Heart left ventricle (tissue), 16 donors: ENCODE measurements at regions of chr12 and their contacts with region 1.

Region 1: DNA sequence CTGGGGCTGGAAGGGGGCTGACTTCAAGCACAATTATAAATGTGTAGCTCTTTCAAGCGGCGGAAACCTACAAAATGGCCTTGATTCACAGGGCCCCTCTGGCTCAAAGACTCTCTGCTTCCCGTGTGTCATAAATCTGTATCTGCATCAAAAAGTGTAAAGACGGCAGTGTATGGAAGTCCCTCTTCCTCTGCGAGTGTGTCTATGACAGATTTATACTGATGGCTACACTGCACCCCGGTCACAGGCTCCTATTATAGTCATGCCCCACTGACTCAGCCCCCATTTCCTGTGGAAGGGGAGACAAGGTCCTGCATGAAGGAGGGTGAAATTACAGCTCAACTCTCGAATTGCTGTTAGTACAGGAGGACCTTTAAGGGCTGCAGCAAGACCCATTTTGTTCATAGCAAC is 68.6 kb downstream of the HMGA2 start:
- DNase-seq: no peak
- ATAC-seq: peak in 1 of 4 donors; percentile 12
- H3K4me3 ChIP-seq: no peak overlapping the region
- H3K27ac ChIP-seq: peak overlapping the region in 6 of 12 donors; percentile 13 to 65 (median 49)
- H3K4me1 ChIP-seq: peaks cover 0 to 20% (median 15%) of the 10 kb centered on the region in 12 donors
- H3K27me3 ChIP-seq: no peaks in the 10 kb centered on the region
- CTCF ChIP-seq: no peak
- POLR2A ChIP-seq: no peak

Region 2: DNA sequence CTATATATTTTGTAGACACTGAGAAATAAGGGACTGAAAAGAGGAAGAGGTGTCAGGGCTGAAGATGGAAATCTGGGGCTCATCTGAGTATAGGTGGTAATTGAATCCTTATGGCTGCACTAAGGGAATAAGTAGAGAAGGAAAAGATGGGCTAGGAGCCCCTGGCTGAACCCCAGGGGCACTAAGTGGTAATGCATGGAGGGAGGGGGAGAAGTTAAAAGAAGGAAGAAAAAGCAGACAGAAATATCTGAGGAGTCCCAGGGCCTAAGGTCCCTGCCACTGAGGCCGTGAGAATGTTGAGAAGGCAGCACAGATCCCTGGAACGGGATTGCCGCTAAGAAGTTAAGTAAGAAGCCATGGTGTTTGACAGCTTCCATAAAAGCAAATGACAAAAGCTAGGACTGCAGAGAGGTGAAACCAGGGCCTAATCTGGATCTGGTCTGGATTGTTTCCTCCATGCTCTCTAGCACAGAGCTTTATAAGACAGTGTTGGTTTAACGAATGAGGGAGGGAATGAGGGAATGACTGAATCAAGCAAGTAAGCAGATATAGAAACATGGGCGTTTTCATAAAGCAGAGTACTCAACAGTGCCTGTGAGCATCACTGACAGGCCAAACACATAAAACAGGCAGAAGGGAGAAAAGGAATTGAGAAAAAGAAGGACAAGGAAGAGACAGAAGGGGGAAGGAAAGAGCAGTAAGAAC is 24.3 kb after region 1 on chr12:
- intact Hi-C with region 1: loop called in 1 of 10 experiments (anchors 1 kb)
- DNase-seq: no peak
- ATAC-seq: no peak
- H3K4me3 ChIP-seq: no peak overlapping the region
- H3K27ac ChIP-seq: no peak overlapping the region
- H3K4me1 ChIP-seq: peaks cover 0 to 20% (median 0%) of the 10 kb centered on the region in 12 donors
- H3K27me3 ChIP-seq: no peaks in the 10 kb centered on the region
- CTCF ChIP-seq: no peak
- POLR2A ChIP-seq: no peak